GM23248 (cell line): ENCODE measurements at regions of chr3 and their contacts with region 1.

Region 1: DNA sequence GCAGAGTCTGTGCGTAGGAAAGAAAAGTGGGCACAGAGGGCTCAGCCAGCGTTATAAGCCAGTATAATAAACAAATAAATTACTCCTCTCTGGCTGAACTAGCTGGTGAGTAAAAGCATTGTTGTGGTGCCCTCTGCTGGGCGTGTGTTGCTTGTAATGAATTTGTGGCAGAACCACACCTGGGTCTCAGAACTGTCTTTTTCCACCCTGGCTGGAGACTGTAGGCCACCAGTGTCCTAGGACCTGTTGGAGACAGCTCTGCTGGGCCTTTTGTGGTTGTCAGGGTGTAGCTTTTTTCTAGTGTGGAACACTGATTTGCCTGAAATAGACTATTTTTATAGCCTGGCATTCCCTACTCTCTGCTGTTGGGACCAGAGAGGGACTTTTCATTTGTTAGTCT is 130.5 kb upstream of the EIF1B start:
- DNase-seq: peak; percentile 79
- H3K4me3 ChIP-seq: no peak overlapping the region
- H3K27ac ChIP-seq: no peak overlapping the region
- H3K4me1 ChIP-seq: peaks cover 4% of the 10 kb centered on the region; the same call in 1 of the 2 replicates
- H3K27me3 ChIP-seq: no peaks in the 10 kb centered on the region

Region 2: DNA sequence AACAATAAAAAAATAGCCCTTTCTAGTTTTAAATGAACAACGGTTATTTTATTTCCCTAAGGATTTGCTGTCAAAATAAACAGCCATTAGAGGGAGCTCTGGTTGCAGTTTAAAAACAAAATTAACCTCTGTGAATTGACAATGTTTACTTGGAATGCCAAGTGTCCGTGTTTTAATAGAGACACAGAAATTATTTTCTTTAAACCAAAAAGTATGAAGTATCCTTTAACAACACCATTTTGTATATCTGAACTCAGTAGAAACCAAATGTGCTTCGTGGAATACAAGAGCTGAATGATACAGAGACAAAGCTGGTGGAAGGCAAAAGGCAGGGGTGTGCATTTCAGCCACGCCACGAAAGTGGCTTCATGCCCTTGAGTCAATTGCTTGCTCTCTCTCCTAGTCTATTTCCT is 637.1 kb before region 1 on chr3:
- in situ Hi-C with region 1: loop called (anchors 25 kb)
- DNase-seq: peak; percentile 56
- H3K4me3 ChIP-seq: peak overlapping the region; percentile 55
- H3K27ac ChIP-seq: no peak overlapping the region
- H3K4me1 ChIP-seq: no peaks in the 10 kb centered on the region
- H3K27me3 ChIP-seq: no peaks in the 10 kb centered on the region

Region 3: DNA sequence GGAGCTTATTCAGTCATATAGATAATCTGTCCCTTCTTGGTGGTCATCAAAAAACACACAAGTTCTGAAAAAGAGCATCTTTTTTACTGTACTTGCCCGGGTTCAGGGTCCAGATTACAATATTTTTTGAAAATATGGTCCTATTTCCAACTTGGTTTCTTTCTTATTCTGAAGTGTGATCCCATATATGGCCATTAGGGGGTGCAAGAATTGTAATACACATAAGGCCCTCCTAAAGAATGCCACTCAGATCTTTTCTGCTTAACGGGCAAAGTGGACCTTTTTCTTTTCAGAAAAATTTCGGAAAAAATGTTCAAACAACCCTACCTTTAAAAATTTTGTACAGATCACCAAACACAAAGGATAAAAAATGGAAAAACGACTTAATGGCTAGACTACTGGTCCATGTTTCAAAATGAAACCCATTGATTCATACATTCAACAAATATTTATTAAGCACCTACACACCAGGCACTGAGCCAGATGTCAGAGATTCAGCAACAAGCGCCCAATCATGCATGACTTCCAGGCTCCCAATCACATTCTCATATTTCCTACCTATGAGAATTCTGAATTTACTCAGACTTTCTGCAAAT is 471.6 kb before region 1 on chr3:
- in situ Hi-C with region 1: loop called (anchors 25 kb)
- DNase-seq: peak; percentile 67
- H3K4me3 ChIP-seq: no peak overlapping the region
- H3K27ac ChIP-seq: no peak overlapping the region
- H3K4me1 ChIP-seq: peaks cover 8% of the 10 kb centered on the region; the same call in 1 of the 2 replicates
- H3K27me3 ChIP-seq: no peaks in the 10 kb centered on the region

Region 4: DNA sequence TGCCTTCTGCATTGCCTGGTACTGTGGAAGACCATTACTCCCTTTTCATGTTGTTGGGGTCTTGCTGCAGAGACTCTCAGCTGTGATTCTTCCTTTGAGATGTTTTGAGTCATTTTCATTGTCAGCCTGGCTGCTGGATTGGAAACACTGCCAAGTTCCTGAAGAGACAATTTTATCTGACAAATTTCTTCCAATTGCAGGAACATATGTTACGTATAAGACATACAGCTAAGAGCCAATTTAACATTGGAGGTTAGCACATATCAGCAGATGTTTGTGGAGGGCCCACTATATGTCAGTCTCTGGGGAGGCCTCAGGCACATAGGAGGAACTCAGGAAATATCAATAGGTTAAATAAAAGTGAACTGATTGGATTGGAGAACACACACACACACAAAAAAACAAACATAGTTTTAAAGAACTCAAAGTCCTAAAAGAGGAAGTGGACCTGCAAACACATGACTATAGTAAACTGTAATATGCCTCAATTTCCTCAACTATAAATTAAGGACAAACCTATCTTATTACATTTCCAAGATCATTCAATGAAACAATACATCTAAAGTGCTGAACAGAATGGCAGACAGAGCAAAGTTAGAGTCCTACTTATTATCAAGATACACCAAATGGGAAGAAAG is 197.3 kb before region 1 on chr3:
- in situ Hi-C with region 1: loop called (anchors 10 kb)
- DNase-seq: no peak
- H3K4me3 ChIP-seq: no peak overlapping the region
- H3K27ac ChIP-seq: no peak overlapping the region
- H3K4me1 ChIP-seq: no peaks in the 10 kb centered on the region
- H3K27me3 ChIP-seq: no peaks in the 10 kb centered on the region

Region 5: GRCh38 chr3:40366203-40367162 is 187.5 kb after region 1 on chr3:
- in situ Hi-C with region 1: no loop called
- DNase-seq: peak; percentile 27
- H3K4me3 ChIP-seq: no peak overlapping the region
- H3K27ac ChIP-seq: no peak overlapping the region
- H3K4me1 ChIP-seq: no peaks in the 10 kb centered on the region
- H3K27me3 ChIP-seq: 0 out of 2 replicates have a peak, but pooled peaks cover 3% of the 10 kb centered on the region